ENCODE measurements at regions of chr4 and their contacts with region 1.

Region 1: GRCh38 chr4:147628415-147628814 is 11.2 kb downstream of the TMEM184C start:
- DNase-seq: no peak
- ATAC-seq: no peak
- H3K4me3 ChIP-seq: no peak overlapping the region
- H3K4me3 Mint-ChIP-seq: no peak overlapping the region
- H3K27ac ChIP-seq: no peak overlapping the region
- H3K27ac Mint-ChIP-seq: peak overlapping the region in 1 of 9 donors; percentile 8
- H3K4me1 ChIP-seq: no peaks in the 10 kb centered on the region
- H3K4me1 Mint-ChIP-seq: peaks cover 0 to 17% (median 10%) of the 10 kb centered on the region in 7 donors
- H3K27me3 ChIP-seq: no peaks in the 10 kb centered on the region
- H3K27me3 Mint-ChIP-seq: no peaks in the 10 kb centered on the region

Region 2: DNA sequence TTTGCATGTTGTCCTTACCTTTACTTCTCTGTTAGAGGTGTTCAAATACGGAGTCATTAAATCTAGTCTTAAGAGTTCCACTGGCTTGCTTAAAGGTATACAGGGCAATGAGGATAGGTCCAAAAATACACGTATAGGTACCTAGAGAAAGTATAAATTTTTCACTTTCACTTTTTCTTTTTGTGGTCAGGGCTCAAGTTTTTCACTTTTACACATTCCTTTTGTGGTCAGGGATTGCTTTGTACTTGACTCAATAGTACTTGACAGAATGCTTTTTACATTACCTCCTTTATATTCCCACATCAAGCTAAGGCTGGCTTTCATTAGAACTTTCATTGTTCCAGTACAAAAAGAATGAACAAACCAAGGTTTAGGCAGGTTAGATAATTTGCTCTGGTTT is 10.5 kb after region 1 on chr4:
- CTCF ChIA-PET with region 1: interaction called, 5 read pairs
- POLR2A ChIA-PET with region 1: no interaction called
- intact Hi-C with region 1: loop called in 1 of 2 experiments (anchors 1 kb)
- DNase-seq: no peak
- ATAC-seq: no peak
- H3K4me3 ChIP-seq: no peak overlapping the region
- H3K4me3 Mint-ChIP-seq: peak overlapping the region in 5 of 10 donors; percentile 15 to 68 (median 34)
- H3K27ac ChIP-seq: peak overlapping the region; percentile 0
- H3K27ac Mint-ChIP-seq: peak overlapping the region in 8 of 9 donors; percentile 10 to 87 (median 65)
- H3K4me1 ChIP-seq: no peaks in the 10 kb centered on the region
- H3K4me1 Mint-ChIP-seq: peaks cover 10 to 30% (median 25%) of the 10 kb centered on the region in 7 donors
- H3K27me3 ChIP-seq: no peaks in the 10 kb centered on the region
- H3K27me3 Mint-ChIP-seq: no peaks in the 10 kb centered on the region

Region 3: GRCh38 chr4:147924604-147925412 is 296.4 kb after region 1 on chr4:
- CTCF ChIA-PET with region 1: no interaction called
- POLR2A ChIA-PET with region 1: no interaction called
- intact Hi-C with region 1: no loop called
- DNase-seq: peak in 1 of 9 donors; percentile 10
- ATAC-seq: no peak
- H3K4me3 ChIP-seq: no peak overlapping the region
- H3K4me3 Mint-ChIP-seq: no peak overlapping the region
- H3K27ac ChIP-seq: no peak overlapping the region
- H3K27ac Mint-ChIP-seq: no peak overlapping the region
- H3K4me1 ChIP-seq: no peaks in the 10 kb centered on the region
- H3K4me1 Mint-ChIP-seq: no peaks in the 10 kb centered on the region
- H3K27me3 ChIP-seq: no peaks in the 10 kb centered on the region
- H3K27me3 Mint-ChIP-seq: no peaks in the 10 kb centered on the region

Measured in naive thymus-derived CD4-positive, alpha-beta T cell (primary cell).